ENCODE measurements at regions of chr9 and their contacts with region 1.

Region 1: DNA sequence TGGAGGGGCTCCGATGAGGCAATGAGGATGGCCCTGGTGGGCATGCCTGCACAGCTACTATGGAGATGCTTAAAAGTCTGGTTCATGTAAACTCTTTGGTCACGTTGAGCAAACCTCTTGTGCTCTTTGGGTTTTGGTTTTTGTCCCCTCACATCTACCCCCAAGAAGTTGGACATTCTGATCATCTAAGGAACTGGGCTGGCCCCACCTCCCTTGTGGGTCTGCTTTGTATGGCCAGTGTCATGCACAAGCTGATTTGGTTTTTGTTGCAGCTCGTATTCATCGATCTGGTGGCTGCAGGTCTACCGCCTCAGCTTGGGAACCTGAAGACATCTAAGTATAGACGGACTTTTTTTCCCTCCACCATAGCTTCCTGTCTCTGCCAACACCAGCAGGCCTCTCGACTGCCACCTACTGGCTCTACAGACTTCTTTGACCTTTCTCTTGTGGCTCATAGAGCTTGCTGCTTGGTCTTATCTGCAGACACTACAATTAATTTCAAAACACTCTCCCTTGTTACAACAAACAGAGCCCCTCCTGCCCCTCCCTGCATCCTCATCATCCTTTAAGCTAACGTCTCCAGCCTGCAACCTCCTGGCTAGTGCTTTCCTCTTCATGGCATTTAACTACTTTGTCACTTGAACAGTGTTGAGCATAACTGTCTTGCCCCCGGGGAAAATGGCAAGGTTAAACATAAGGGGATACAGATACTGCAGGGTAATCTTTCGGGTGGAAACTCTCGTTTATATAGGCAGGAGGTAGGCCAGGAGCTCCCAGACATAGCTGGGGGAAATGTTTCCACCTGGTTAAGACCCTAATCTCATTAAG is 34.5 kb downstream of the TSTD2 start:
- DNase-seq: peak; percentile 85
- H3K4me3 ChIP-seq: peak overlapping the region in 1 of 8 donors; percentile 23
- H3K27ac ChIP-seq: no peak overlapping the region
- H3K4me1 ChIP-seq: peaks cover 0 to 9% (median 6%) of the 10 kb centered on the region in 6 donors
- H3K27me3 ChIP-seq: no peaks in the 10 kb centered on the region
- CTCF ChIP-seq: peak; percentile 39 to 83 (median 73)
- POLR2A ChIP-seq: no peak

Region 2: GRCh38 chr9:97321711-97322504 is 276.8 kb before region 1 on chr9:
- intact Hi-C with region 1: no loop called
- DNase-seq: no peak
- H3K4me3 ChIP-seq: no peak overlapping the region
- H3K27ac ChIP-seq: no peak overlapping the region
- H3K4me1 ChIP-seq: no peaks in the 10 kb centered on the region
- H3K27me3 ChIP-seq: no peaks in the 10 kb centered on the region
- CTCF ChIP-seq: no peak
- POLR2A ChIP-seq: no peak

Region 3: GRCh38 chr9:97468658-97469448 is 129.8 kb before region 1 on chr9:
- intact Hi-C with region 1: loop called (anchors 5 kb)
- DNase-seq: no peak
- H3K4me3 ChIP-seq: no peak overlapping the region
- H3K27ac ChIP-seq: no peak overlapping the region
- H3K4me1 ChIP-seq: peaks cover 0 to 3% (median 0%) of the 10 kb centered on the region in 6 donors
- H3K27me3 ChIP-seq: no peaks in the 10 kb centered on the region
- CTCF ChIP-seq: peak; percentile 35 to 76 (median 59)
- POLR2A ChIP-seq: no peak